H1 (cell line): ENCODE measurements at regions of chr16 and their contacts with region 1.

Region 1: GRCh38 chr16:5918567-5919127 is 821.1 kb upstream of the EEF2KMT start:
- DNase-seq: peak in 1 of 2 experiments; percentile 78
- H3K4me3 ChIP-seq: no peak overlapping the region
- H3K27ac ChIP-seq: no peak overlapping the region
- H3K4me1 ChIP-seq: peaks cover 3 to 16% (median 6%) of the 10 kb centered on the region in 4 experiments; a peak in 6 of 7 replicates
- H3K27me3 ChIP-seq: 0 out of 7 replicates have a peak, but pooled peaks cover 0 to 3% (median 0%) of the 10 kb centered on the region in 4 experiments
- CTCF ChIP-seq: peak; percentile 81 to 92 (median 86)
- EP300 ChIP-seq: no peak
- POLR2A ChIP-seq: no peak
- RAD21 ChIP-seq: peak; percentile 75 to 82

Region 2: DNA sequence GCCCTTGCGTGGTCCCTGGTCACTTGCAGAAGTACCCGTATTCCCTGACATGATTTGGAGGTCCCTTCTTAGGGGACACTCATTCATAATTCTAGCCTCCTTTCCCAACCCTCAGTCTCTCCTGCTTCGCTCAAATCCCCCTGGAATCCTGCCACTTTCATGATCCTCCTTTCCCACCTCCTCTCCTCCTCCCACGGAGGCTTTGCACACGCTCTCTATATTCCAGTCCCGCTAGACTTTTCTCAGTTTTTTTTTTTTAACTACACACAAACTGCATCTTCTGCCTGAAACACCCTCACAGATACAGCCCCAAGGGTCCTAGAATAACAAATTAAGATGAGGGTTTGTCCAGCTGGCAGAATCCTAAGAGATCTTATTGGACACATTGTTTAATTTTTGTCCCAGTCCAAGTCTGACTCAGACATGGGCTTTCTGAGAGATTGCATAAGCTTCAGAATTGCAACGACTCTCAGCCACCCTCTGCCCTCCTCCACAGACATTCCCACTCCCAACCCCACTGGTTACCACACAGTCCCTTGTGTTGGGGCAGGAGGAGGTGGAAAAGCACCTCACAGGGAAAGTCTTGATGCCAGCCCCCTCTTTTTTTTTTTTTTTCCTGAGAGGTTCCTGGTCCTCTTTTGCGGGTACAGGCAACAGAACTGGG is 81.5 kb before region 1 on chr16:
- CTCF ChIA-PET with region 1: no interaction called
- POLR2A ChIA-PET with region 1: no interaction called
- DNase-seq: no peak
- H3K4me3 ChIP-seq: no peak overlapping the region
- H3K27ac ChIP-seq: no peak overlapping the region
- H3K4me1 ChIP-seq: peaks cover 0 to 2% (median 1%) of the 10 kb centered on the region in 4 experiments; a peak in 2 of 7 replicates
- H3K27me3 ChIP-seq: no peaks in the 10 kb centered on the region
- CTCF ChIP-seq: no peak
- EP300 ChIP-seq: no peak
- POLR2A ChIP-seq: no peak
- RAD21 ChIP-seq: no peak

Region 3: GRCh38 chr16:5965321-5965720 is 46.7 kb after region 1 on chr16:
- CTCF ChIA-PET with region 1: interaction called, 11 read pairs
- POLR2A ChIA-PET with region 1: no interaction called
- DNase-seq: no peak
- H3K4me3 ChIP-seq: no peak overlapping the region
- H3K27ac ChIP-seq: no peak overlapping the region
- H3K4me1 ChIP-seq: no peaks in the 10 kb centered on the region; a peak in 2 of 7 replicates
- H3K27me3 ChIP-seq: no peaks in the 10 kb centered on the region
- CTCF ChIP-seq: no peak
- EP300 ChIP-seq: no peak
- POLR2A ChIP-seq: no peak
- RAD21 ChIP-seq: no peak